HepG2 (cell line): ENCODE measurements at regions of chr7 and their contacts with region 1.

Region 1: DNA sequence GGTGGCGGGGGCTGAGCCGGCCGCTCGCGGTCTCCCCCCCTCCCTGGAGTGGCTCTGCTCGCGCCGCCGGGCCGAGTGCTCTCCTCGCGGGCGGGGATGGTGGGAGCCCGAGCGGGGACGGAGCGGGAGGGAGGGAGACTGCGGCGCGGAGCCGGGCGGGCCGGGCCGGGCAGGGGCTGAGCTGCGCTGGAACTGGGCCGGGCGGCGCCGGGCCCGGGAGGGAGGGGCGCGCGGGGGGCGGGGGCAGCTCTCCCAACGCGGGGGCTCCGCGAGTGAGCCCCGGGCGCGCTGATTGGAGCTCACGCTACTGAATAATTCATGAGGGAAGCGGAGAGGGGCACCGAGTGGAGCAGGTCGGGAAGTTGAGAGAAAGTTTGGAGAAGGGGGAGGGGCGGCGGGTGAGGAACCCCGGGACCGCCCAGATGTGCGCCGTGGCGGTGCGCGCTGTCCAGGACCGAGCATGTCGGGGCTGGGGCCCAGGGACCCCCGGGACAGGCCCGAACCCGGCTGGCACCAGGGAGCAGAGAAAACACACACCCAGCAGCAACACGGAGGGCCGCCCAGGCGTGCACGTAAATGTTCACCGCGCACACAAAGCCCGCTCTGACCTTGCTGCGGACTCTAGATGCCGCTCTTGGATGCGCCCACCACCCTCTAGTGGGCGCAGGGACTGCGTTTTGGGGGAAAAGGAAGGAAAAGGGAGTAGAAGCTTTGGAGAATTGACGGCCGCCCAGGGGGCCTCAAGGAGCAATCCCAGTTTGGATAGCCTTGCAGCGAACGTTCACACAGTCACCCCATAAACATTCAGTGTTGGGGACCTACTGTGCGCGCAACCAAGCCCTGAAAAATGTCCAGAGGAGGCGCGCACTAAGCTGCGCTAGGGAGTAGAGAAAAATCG is at the start of gene EPHB4:
- DNase-seq: peak; percentile 90
- ATAC-seq: peak; percentile 81
- H3K4me3 ChIP-seq: peak within 1 kb of the TSS; percentile 81 to 90 (median 87)
- H3K27ac ChIP-seq: peak within 1 kb of the TSS; percentile 69
- H3K4me1 ChIP-seq: peaks cover 71% of the 10 kb centered on the region
- H3K27me3 ChIP-seq: no peaks in the 10 kb centered on the region; a peak in 2 of 5 replicates
- CTCF ChIP-seq: peak; percentile 85
- EP300 ChIP-seq: no peak
- POLR2A ChIP-seq: peak; percentile 51 to 73
- RAD21 ChIP-seq: peak; percentile 67; the same call in 1 of the 2 replicates
- total RNA-seq, gene EPHB4: 43.7 and 69.6 TPM in 2 replicates

Region 2: DNA sequence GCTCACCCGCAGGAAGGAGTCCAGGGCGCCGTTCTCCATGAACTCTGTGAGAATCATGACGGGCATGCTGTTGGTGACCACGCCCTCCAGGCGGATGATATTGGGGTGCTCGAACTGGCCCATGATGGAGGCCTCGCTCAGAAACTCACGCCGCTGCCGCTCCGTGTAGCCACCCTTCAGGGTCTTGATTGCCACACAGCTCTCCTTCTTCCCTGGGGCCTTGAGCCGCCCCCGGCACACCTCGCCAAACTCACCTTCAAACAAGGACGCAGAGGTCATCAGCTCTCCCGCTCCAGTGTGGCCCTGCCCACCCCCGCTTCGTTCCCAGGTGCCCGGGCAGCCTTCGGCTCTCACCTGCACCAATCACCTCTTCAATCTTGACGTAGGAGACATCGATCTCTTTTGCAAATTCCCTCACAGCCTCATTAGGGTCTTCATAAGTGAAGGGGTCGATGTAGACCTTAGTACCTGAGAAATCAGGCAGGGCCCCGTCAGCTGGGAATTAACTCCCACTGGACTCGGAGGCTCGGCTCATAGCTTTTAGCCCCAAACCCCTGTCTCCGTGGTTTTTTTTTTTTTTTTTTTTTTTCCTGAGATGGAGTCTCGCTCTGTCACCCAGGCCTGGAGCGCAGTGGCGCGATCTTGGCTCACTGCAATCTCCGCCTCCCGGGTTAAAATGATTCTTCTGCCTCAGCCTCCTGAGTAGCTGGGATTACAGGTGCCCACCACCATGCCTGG is 14.7 kb before region 1 on chr7:
- CTCF ChIA-PET with region 1: no interaction called
- POLR2A ChIA-PET with region 1: interaction called, 38 read pairs
- in situ Hi-C with region 1: no loop called
- intact Hi-C with region 1: no loop called
- DNase-seq: no peak
- ATAC-seq: no peak
- H3K4me3 ChIP-seq: no peak overlapping the region
- H3K27ac ChIP-seq: no peak overlapping the region
- H3K4me1 ChIP-seq: peaks cover 58% of the 10 kb centered on the region
- H3K27me3 ChIP-seq: no peaks in the 10 kb centered on the region
- CTCF ChIP-seq: no peak
- EP300 ChIP-seq: no peak
- POLR2A ChIP-seq: no peak
- RAD21 ChIP-seq: no peak

Region 3: GRCh38 chr7:100852048-100852872 is 24.7 kb after region 1 on chr7 and contains the start of gene SLC12A9:
- CTCF ChIA-PET with region 1: interaction called, 5 read pairs
- POLR2A ChIA-PET with region 1: interaction called, 30 read pairs
- in situ Hi-C with region 1: no loop called
- intact Hi-C with region 1: no loop called
- DNase-seq: peak; percentile 73
- ATAC-seq: peak; percentile 99
- H3K4me3 ChIP-seq: peak within 1 kb of the TSS; percentile 62 to 87 (median 85)
- H3K27ac ChIP-seq: no peak within 1 kb of the TSS
- H3K4me1 ChIP-seq: peaks cover 23% of the 10 kb centered on the region
- H3K27me3 ChIP-seq: no peaks in the 10 kb centered on the region; a peak in 1 of 5 replicates
- CTCF ChIP-seq: peak; percentile 97
- EP300 ChIP-seq: no peak
- POLR2A ChIP-seq: peak in 1 of 2 experiments; percentile 59; a peak in 2 of 4 replicates
- RAD21 ChIP-seq: peak; percentile 97
- total RNA-seq, gene SLC12A9: 5.4 and 16.6 TPM in 2 replicates

Region 4: GRCh38 chr7:100874577-100875355 is 47.2 kb after region 1 on chr7 and contains the start of gene SRRT:
- CTCF ChIA-PET with region 1: no interaction called
- POLR2A ChIA-PET with region 1: interaction called, 12 read pairs
- in situ Hi-C with region 1: no loop called
- intact Hi-C with region 1: no loop called
- DNase-seq: peak; percentile 94
- ATAC-seq: peak; percentile 94
- H3K4me3 ChIP-seq: peak within 1 kb of the TSS; percentile 84 to 89 (median 86)
- H3K27ac ChIP-seq: peak within 1 kb of the TSS; percentile 87
- H3K4me1 ChIP-seq: peaks cover 45% of the 10 kb centered on the region
- H3K27me3 ChIP-seq: peaks cover 0 to 2% of the 10 kb centered on the region in 2 experiments; a peak in 1 of 5 replicates
- CTCF ChIP-seq: peak; percentile 16
- EP300 ChIP-seq: peak in 1 of 2 experiments; percentile 29; a peak in 1 of 4 replicates
- POLR2A ChIP-seq: peak; percentile 91 to 98
- RAD21 ChIP-seq: no peak; the same call in 1 of the 2 replicates
- total RNA-seq, gene SRRT: 79.1 and 106 TPM in 2 replicates